Psoas muscle (tissue), 8 donors: ENCODE measurements at regions of chr14 and their contacts with region 1.

Region 1: DNA sequence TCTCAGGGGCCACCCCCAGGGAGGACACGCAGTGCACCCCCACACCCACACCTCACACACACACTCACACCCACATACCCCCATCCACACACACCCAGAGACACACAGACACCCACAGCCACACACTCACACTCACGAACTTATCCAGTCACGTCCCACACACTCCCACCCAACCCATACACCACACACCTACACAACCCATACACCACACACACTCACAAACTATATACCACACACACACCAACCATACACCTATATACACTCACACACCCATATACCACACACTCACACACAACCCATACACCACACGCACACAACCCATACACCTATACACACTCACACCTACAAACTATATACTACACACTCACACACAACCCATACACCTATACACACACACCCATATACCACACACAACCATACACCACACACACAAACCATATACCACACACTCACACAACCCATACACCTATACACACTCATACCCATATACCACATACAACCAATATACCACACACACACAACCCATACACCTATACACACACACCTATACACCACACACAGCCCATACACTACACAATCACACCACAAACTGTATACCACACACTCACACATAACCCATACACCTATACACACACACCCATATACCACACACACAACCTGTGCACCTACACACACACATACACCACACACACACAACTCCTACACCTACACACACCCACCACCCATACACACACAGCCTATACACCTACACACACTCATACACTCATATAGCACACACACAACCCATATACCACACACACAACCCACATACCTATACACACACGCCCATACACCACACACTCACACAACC is 42.7 kb downstream of the TMEM121 start:
- DNase-seq: no peak
- ATAC-seq: no peak
- H3K4me3 ChIP-seq: no peak overlapping the region
- H3K27ac ChIP-seq: no peak overlapping the region
- H3K4me1 ChIP-seq: no peaks in the 10 kb centered on the region
- H3K27me3 ChIP-seq: no peaks in the 10 kb centered on the region
- CTCF ChIP-seq: no peak

Region 2: DNA sequence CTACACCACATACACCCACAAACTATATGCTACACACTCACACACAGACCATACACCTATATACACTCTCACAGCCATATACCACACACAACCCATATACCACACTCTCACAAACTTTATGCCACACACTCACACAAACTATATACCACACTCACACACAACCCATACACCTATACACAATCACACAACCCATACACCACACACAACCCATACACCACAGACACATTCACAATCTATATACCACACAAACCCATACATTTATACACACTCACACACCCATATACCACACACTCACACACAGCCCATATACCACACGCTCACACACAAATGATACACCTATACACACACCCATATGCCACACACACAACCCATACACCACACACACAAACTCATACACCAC is 120.6 kb after region 1 on chr14:
- intact Hi-C with region 1: loop called in 1 of 2 experiments (anchors 5 kb)
- DNase-seq: no peak
- ATAC-seq: no peak
- H3K4me3 ChIP-seq: no peak overlapping the region
- H3K27ac ChIP-seq: no peak overlapping the region
- H3K4me1 ChIP-seq: no peaks in the 10 kb centered on the region
- H3K27me3 ChIP-seq: no peaks in the 10 kb centered on the region
- CTCF ChIP-seq: no peak